ENCODE measurements at regions of chr5 and their contacts with region 1.

Region 1: GRCh38 chr5:134738133-134738962 is at the start of gene CAMLG:
- DNase-seq: peak; percentile 97
- ATAC-seq: peak; percentile 88 to 91
- H3K4me3 ChIP-seq: peak within 1 kb of the TSS; percentile 94 to 100 (median 97)
- H3K27ac ChIP-seq: peak within 1 kb of the TSS; percentile 87 to 99 (median 96)
- H3K4me1 ChIP-seq: peaks cover 8 to 14% of the 10 kb centered on the region in 2 donors
- H3K27me3 ChIP-seq: no peaks in the 10 kb centered on the region
- CTCF ChIP-seq: peak in 3 of 5 experiments; percentile 46 to 58 (median 53)
- POLR2A ChIP-seq: peak; percentile 92 to 95
- total RNA-seq, gene CAMLG: 30.8 to 51.6 (median 39.2) TPM

Region 2: DNA sequence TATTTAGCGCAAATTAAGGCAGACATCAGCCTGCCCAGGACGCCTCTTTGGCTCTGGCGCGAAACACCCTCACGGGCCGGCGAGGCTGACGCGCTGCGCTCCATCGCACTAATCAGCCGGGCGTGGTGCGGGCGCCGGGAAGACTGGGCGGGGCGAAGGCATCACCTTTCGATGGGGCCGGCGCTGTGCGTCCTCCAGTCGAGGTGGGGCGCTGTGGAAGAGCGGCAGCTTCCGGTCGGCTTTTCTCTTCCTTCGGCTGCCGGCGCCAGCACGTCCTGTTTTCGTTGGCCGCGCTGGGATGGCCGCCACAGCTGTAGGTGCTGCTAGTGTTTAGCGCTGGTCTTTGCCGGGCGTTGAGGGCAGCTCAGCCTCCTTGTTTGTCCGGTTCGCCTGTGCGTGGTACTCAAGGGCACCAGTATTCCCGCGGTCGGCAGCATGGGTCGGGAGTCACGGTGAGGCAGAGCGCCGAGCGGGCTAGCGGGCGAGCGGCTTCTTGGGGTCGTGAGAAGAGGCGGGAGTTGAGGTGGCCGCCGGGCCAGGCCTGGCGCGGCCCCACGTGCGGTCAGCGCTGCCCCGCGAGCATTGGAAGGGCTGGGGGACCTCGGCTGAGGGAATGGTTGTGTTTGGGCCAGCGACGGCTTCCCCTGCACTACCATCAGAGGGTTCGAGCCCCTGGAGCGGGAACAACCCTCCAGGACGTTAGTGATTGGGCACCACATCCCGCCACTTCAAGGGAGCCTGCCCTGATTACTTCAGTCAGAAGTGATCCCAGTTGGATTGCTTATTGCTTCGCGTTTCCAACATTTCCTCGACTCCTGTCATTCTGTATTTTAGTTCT is 20.4 kb after region 1 on chr5 and contains the start of gene DDX46:
- in situ Hi-C with region 1: no loop called
- intact Hi-C with region 1: loop called (anchors 1 kb)
- DNase-seq: peak; percentile 85 to 90
- ATAC-seq: peak; percentile 97
- H3K4me3 ChIP-seq: peak within 1 kb of the TSS; percentile 88 to 99 (median 94)
- H3K27ac ChIP-seq: peak within 1 kb of the TSS; percentile 80 to 93 (median 88)
- H3K4me1 ChIP-seq: peaks cover 20 to 29% of the 10 kb centered on the region in 2 donors
- H3K27me3 ChIP-seq: no peaks in the 10 kb centered on the region
- CTCF ChIP-seq: peak; percentile 48 to 83 (median 66)
- POLR2A ChIP-seq: peak; percentile 70 to 82
- total RNA-seq, gene DDX46: 29.1 to 41.3 (median 36.8) TPM

Measured in gastrocnemius medialis (tissue), 4 donors.